Prostate gland (tissue), 2 donors: ENCODE measurements at regions of chr15 and their contacts with region 1.

Region 1: DNA sequence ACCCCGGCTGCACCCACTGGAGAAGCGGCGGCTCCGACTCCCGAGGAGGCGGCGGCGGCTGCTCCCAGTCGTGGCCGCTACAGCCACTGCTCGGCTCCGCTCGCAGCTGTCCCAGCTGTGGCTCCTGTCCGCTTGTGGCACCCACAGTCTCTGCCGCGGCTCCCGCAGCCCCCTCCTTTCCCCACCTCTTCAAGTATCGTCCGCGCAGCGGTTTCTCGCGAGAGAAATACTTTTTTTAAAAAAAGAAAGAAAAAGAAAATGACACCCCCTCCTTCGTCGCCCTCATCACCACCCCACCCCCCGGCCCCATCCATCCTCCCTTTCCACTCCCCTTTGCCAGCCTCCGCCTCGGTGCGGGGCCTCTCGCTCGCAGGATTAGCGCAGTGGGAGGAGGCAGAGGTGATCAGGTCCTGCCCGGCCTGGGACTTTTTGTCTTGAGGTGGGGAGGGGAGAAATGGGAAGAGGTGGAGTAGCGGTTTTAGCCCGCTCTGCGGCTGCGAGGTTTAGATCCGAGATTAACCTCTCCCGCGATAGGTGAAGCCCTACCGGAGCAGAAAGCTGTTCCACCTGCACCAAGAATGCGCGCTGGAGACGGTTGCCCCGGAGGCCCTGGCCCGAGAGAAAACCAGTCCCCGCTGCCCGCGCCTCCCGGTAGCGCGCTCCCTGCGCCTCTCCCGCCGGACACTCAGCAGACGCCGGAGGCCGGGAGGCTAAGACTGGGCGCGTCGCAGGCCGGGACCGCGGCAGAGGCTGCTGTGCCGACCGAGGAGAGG is at the start of gene FBN1:
- DNase-seq: no peak
- H3K4me3 ChIP-seq: peak within 1 kb of the TSS; percentile 58 to 63
- H3K27ac ChIP-seq: peak within 1 kb of the TSS; percentile 74 to 75
- H3K4me1 ChIP-seq: no peaks in the 10 kb centered on the region
- H3K27me3 ChIP-seq: no peaks in the 10 kb centered on the region
- CTCF ChIP-seq: no peak
- POLR2A ChIP-seq: peak; percentile 2
- total RNA-seq, gene FBN1: 12.1 to 81.9 TPM

Region 2: GRCh38 chr15:48358229-48358641 is 287.5 kb before region 1 on chr15:
- intact Hi-C with region 1: loop called (anchors 5 kb)
- DNase-seq: no peak
- H3K4me3 ChIP-seq: no peak overlapping the region
- H3K27ac ChIP-seq: no peak overlapping the region
- H3K4me1 ChIP-seq: no peaks in the 10 kb centered on the region
- H3K27me3 ChIP-seq: no peaks in the 10 kb centered on the region
- CTCF ChIP-seq: peak; percentile 37 to 69 (median 62)
- POLR2A ChIP-seq: no peak

Region 3: DNA sequence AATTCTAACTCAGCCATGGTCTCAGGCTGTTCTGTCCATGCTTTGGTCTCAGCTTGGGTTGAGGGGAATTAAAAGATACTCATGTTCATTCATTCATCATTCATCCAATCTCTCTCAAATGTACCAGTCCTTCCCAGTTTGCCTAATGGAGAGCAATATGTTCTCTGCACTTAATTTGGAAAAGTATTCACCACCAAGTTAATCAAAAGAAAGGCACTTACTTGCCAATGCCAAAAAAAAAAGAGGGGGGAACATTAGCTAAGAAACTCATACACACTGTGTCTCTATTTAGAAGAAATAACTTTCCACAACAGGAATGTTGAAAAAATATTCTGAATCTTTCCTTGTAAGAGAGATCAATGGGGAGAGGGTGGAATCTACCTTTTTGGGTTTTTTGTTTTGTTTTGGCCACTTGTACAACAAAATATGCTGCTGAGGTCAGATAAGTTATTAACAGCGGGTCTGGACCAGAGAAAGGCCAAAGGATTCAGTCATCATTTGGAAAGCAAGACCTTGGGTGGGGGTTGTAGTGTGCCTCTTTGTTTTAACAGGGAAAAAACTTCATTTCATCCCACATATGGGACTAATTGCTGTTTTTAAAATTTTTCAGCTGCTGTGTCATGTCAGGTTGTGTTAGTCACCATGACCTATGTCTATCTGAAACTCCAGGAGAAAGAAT is 152.5 kb before region 1 on chr15:
- intact Hi-C with region 1: loop called (anchors 10 kb)
- DNase-seq: no peak
- H3K4me3 ChIP-seq: no peak overlapping the region
- H3K27ac ChIP-seq: peak overlapping the region; percentile 25 to 41
- H3K4me1 ChIP-seq: no peaks in the 10 kb centered on the region
- H3K27me3 ChIP-seq: no peaks in the 10 kb centered on the region
- CTCF ChIP-seq: no peak
- POLR2A ChIP-seq: no peak